ENCODE measurements at regions of chrX and their contacts with region 1.

Region 1: DNA sequence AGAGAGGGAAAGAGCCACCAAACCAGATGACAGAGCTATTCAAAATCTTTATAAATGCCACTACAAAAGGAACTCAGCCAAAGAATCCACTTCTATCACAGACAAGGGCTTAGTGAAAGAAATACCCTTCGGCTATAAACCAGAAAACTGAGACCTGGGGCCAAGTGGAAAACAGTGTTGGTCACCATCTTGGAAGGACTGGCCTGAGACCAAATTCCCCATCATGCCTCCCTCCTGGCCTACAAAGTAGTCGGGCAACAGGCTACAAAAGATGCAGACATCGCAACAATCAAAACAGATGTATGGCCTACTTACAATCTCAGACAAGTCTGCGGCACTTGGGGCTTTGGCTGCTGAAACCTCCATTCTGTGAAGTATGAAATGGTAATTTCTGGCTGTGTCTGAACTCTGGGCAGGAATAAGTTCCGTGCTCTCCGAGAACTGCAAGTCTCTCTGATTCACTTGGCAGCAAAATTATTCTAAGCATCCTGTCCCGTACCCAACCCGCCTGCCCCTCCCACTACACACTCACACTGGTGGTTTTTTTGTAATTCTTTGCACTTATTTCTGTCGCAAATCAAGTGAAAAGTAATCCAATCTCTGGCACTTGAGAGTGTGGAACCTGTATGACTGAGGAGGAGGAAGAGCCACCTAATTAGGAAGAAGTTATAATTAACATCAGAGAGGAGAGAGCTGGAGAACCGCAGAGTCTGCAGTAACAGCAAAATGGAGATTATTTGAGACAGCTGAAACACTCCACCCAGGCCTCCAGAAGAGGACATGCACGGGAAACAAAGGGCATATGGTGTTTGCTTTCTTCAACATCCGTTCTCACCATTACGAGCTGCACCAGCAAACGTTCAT is 87.8 kb downstream of the SH3KBP1 start:
- DNase-seq: peak; percentile 65
- ATAC-seq: peak; percentile 78
- H3K4me3 Mint-ChIP-seq: peak overlapping the region; percentile 84
- H3K27ac Mint-ChIP-seq: peak overlapping the region; percentile 98
- H3K4me1 Mint-ChIP-seq: peaks cover 66% of the 10 kb centered on the region
- H3K27me3 Mint-ChIP-seq: no peaks in the 10 kb centered on the region

Region 2: GRCh38 chrX:19840899-19841648 is 41.5 kb after region 1 on chrX:
- CTCF ChIA-PET with region 1: interaction called, 3 read pairs
- POLR2A ChIA-PET with region 1: no interaction called
- intact Hi-C with region 1: loop called (anchors 5 kb)
- DNase-seq: peak; percentile 63
- ATAC-seq: peak; percentile 69
- H3K4me3 Mint-ChIP-seq: peak overlapping the region; percentile 55
- H3K27ac Mint-ChIP-seq: peak overlapping the region; percentile 97
- H3K4me1 Mint-ChIP-seq: peaks cover 84% of the 10 kb centered on the region
- H3K27me3 Mint-ChIP-seq: no peaks in the 10 kb centered on the region

Region 3: DNA sequence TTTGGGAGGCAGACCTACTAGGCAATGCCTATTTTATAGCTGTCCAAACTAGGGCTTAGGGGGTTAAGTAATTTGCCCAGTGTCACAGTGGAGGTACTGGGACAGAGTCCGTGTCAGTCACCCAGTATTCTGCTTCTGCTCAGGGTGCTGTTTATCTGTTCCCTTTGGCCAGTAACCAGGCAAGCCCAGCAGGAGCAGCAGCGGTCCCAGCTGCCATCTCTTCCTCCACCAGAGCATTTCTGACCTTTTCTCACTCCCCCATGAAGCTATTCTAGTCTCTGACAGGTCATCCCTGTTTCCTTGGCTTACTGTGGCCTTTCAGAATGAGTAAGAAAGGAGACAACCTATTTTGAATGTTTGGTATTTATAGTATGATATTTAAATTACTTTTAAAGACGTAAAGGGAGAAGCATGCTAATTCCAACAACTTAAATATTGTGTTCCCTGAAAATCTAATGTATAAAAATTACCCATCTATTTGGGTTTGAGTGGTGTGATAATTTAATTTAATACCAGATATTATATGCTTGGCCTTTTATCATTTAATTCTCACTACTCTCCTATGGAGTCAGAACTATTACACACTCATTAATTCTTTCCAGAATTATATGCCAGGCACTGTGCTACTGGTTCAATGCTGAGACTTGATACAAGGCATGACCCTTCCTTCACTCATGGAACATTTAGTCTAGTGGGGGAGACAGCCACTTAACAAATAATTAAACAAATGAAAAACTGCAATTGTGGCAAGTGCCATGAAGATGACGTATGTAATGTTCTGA is 406.6 kb after region 1 on chrX:
- CTCF ChIA-PET with region 1: no interaction called
- POLR2A ChIA-PET with region 1: no interaction called
- intact Hi-C with region 1: no loop called
- DNase-seq: peak; percentile 9
- ATAC-seq: peak; percentile 42
- H3K4me3 Mint-ChIP-seq: no peak overlapping the region
- H3K27ac Mint-ChIP-seq: peak overlapping the region; percentile 27
- H3K4me1 Mint-ChIP-seq: peaks cover 42% of the 10 kb centered on the region
- H3K27me3 Mint-ChIP-seq: no peaks in the 10 kb centered on the region